ENCODE measurements at regions of chr16 and their contacts with region 1.

Region 1: GRCh38 chr16:72467157-72467759 is 295.3 kb upstream of the PMFBP1 start:
- DNase-seq: peak; percentile 49
- H3K4me3 ChIP-seq: no peak overlapping the region
- H3K27ac ChIP-seq: no peak overlapping the region
- H3K4me1 ChIP-seq: no peaks in the 10 kb centered on the region
- H3K27me3 ChIP-seq: no peaks in the 10 kb centered on the region
- CTCF ChIP-seq: peak; percentile 68

Region 2: DNA sequence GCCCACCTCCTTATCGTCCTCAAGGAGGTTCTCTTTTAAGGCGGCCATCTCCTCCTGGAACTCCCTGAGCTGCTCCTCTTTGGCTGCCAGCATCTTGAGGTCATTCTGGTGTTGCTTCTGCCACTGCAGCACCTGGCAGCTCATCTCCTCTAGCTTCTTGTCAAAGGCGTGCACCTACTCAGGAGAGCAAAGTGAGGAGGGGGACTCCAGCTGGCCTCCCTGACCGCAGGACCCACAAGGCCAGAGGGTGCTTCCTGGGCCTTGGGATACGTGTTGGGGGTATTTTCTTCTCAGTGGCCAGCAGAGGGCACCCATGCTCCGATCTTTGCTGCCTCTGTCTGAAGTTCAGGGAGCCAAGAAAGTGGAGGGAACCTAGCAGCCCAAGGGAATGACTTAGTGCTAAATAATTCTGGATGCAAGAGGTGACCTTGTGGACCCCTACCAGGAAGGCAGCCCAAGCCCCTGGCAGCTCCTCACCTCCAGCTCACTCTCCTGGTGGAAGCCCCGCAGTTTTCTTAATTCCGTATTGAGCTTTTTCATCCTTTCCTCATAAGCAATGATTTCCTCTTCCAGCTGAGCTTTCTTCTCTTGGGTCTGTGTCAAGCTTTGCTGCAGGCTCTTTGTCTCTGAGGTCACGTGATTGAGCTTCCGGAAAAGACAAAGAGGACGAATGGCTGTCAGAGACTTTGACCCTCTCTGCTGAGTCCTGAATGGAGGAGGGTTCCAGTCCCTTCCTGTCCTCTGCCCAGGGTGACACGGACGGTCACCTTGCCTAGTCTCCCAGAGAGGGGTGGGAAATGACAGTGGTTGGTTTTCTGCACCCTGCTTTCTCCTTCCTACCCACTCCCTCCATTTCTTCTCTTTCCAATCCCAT is 342.3 kb before region 1 on chr16:
- CTCF ChIA-PET with region 1: interaction called, 7 read pairs
- POLR2A ChIA-PET with region 1: no interaction called
- intact Hi-C with region 1: loop called (anchors 5 kb)
- DNase-seq: peak; percentile 81
- H3K4me3 ChIP-seq: no peak overlapping the region
- H3K27ac ChIP-seq: no peak overlapping the region
- H3K4me1 ChIP-seq: peaks cover 5% of the 10 kb centered on the region
- H3K27me3 ChIP-seq: no peaks in the 10 kb centered on the region
- CTCF ChIP-seq: peak; percentile 81

Region 3: DNA sequence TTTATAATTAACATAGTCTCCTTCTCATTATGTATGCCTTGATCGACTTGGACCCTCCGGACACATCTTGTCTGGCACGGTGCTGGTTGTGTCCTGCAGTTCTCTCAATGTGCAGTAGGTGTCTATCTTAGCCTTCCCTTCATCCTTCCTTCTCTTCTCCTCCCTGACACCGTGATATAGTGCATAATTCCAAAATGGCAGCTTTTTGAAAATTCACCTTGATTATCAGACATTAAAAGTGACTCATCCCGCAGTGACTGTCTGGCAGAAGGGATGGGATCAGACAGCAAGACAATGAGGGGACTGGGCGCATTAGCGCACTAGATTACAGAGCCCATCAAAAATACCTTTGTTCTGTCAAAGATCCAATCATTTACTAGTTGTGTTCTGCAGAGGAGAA is 225.3 kb before region 1 on chr16:
- CTCF ChIA-PET with region 1: interaction called, 4 read pairs
- POLR2A ChIA-PET with region 1: no interaction called
- intact Hi-C with region 1: loop called (anchors 5 kb)
- DNase-seq: peak; percentile 51
- H3K4me3 ChIP-seq: no peak overlapping the region
- H3K27ac ChIP-seq: no peak overlapping the region
- H3K4me1 ChIP-seq: no peaks in the 10 kb centered on the region
- H3K27me3 ChIP-seq: no peaks in the 10 kb centered on the region
- CTCF ChIP-seq: peak; percentile 65

Region 4: GRCh38 chr16:72389791-72390190 is 77.5 kb before region 1 on chr16:
- CTCF ChIA-PET with region 1: no interaction called
- POLR2A ChIA-PET with region 1: interaction called, 25 read pairs
- intact Hi-C with region 1: no loop called
- DNase-seq: no peak
- H3K4me3 ChIP-seq: no peak overlapping the region
- H3K27ac ChIP-seq: no peak overlapping the region
- H3K4me1 ChIP-seq: no peaks in the 10 kb centered on the region
- H3K27me3 ChIP-seq: no peaks in the 10 kb centered on the region
- CTCF ChIP-seq: no peak

Region 5: GRCh38 chr16:72400257-72400882 is 66.9 kb before region 1 on chr16:
- CTCF ChIA-PET with region 1: interaction called, 4 read pairs
- POLR2A ChIA-PET with region 1: no interaction called
- intact Hi-C with region 1: loop called (anchors 5 kb)
- DNase-seq: peak; percentile 81
- H3K4me3 ChIP-seq: no peak overlapping the region
- H3K27ac ChIP-seq: no peak overlapping the region
- H3K4me1 ChIP-seq: no peaks in the 10 kb centered on the region
- H3K27me3 ChIP-seq: no peaks in the 10 kb centered on the region
- CTCF ChIP-seq: peak; percentile 82

Measured in A673 (cell line).